ENCODE measurements at regions of chr7 and their contacts with region 1.

Region 1: DNA sequence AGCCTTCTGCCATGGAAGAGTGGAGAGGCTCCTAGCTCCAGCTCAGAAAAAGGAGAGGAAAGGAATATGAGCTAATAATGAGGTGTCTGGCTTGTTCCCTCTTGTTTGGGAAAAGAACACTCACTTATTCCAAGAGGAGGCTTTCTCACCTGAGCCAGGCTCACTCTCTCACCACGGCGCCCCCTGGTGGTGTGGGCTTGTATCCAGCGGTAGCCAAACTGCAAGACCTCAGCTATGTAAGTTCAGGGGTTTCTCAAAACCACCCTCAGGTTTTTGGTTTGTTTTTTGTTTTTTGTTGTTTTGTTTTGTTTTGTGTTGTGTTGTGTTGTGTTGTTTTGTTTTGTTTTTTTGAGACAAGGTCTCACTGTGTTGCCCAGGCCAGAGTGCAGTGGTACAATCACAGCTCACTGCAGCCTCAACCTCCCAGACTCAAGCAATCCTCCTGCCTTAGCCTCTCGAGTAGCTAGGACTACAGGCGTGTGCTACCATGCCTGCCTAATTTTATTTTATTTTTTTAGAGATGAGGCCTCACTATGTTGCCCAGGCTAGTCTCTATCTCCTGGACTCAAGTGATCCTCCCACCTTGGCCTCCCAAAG is 124.0 kb downstream of the TMEM130 start:
- DNase-seq: peak; percentile 73
- ATAC-seq: peak; percentile 39
- H3K4me3 Mint-ChIP-seq: no peak overlapping the region
- H3K27ac Mint-ChIP-seq: no peak overlapping the region
- H3K4me1 Mint-ChIP-seq: no peaks in the 10 kb centered on the region
- H3K27me3 Mint-ChIP-seq: no peaks in the 10 kb centered on the region

Region 2: DNA sequence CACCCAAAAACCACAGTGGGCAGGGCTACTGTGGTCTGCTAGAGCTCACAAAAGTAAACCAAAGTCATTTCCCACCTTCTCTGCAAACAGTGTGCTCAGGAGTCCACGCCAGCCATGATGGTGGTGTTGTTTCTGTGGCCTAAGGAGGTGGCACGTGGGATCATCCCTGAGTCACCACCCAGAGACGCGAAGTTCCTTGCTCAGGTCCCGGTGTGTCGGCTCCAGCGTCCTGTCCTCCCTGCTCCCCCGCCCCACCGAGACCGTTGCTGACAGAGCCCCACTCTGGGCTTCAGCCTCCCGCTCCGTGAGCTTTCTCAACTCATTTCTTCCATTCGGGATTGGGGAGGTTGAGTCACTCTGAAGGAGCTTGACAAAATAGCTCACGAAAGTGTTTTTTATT is 10.0 kb before region 1 on chr7:
- CTCF ChIA-PET with region 1: interaction called, 10 read pairs
- DNase-seq: no peak
- ATAC-seq: no peak
- H3K4me3 Mint-ChIP-seq: no peak overlapping the region
- H3K27ac Mint-ChIP-seq: no peak overlapping the region
- H3K4me1 Mint-ChIP-seq: no peaks in the 10 kb centered on the region
- H3K27me3 Mint-ChIP-seq: no peaks in the 10 kb centered on the region

Region 3: GRCh38 chr7:98795741-98796493 is 50.1 kb after region 1 on chr7:
- CTCF ChIA-PET with region 1: no interaction called
- DNase-seq: no peak
- ATAC-seq: peak; percentile 71
- H3K4me3 Mint-ChIP-seq: no peak overlapping the region
- H3K27ac Mint-ChIP-seq: peak overlapping the region; percentile 50
- H3K4me1 Mint-ChIP-seq: peaks cover 8% of the 10 kb centered on the region
- H3K27me3 Mint-ChIP-seq: no peaks in the 10 kb centered on the region

Region 4: GRCh38 chr7:98841179-98841997 is 95.6 kb after region 1 on chr7:
- CTCF ChIA-PET with region 1: interaction called, 14 read pairs
- DNase-seq: peak; percentile 72
- ATAC-seq: peak; percentile 68
- H3K4me3 Mint-ChIP-seq: no peak overlapping the region
- H3K27ac Mint-ChIP-seq: no peak overlapping the region
- H3K4me1 Mint-ChIP-seq: no peaks in the 10 kb centered on the region
- H3K27me3 Mint-ChIP-seq: peaks cover 6% of the 10 kb centered on the region

Region 5: GRCh38 chr7:98922393-98923187 is 176.8 kb after region 1 on chr7:
- CTCF ChIA-PET with region 1: no interaction called
- DNase-seq: no peak
- ATAC-seq: no peak
- H3K4me3 Mint-ChIP-seq: no peak overlapping the region
- H3K27ac Mint-ChIP-seq: no peak overlapping the region
- H3K4me1 Mint-ChIP-seq: no peaks in the 10 kb centered on the region
- H3K27me3 Mint-ChIP-seq: no peaks in the 10 kb centered on the region

Measured in activated CD8-positive, alpha-beta memory T cell treated with anti-CD3 and anti-CD28 coated beads, Interleukin-2, amount 10 ng/mL, durations not matched to agents 7 days and 5 days (primary cell).